K562 (cell line): ENCODE measurements at regions of chr18 and their contacts with region 1.

Region 1: DNA sequence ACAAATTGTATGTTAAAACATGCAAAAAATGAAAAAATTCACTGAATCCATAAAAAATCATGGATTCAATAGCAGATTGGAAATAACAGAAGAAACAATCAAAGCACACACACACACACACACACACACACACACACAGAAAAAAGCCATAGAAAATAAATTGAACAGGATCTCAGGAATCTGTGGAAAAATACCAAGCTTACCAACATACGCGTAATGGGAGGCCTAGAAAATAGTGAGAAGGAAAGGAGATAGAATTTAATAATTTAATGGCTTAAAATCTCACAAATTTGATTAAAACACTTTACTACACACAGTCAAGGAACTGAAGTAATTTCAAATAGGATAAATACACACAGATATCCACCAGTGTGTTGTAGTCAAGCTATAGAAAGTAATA is 1671.5 kb upstream of the PIK3C3 start:
- DNase-seq: no peak
- ATAC-seq: no peak
- H3K4me3 ChIP-seq: no peak overlapping the region
- H3K27ac ChIP-seq: no peak overlapping the region
- H3K4me1 ChIP-seq: no peaks in the 10 kb centered on the region
- H3K27me3 ChIP-seq: no peaks in the 10 kb centered on the region
- CTCF ChIP-seq: no peak
- EP300 ChIP-seq: no peak
- POLR2A ChIP-seq: no peak
- RAD21 ChIP-seq: no peak

Region 2: GRCh38 chr18:39772155-39772919 is 511.2 kb before region 1 on chr18:
- CTCF ChIA-PET with region 1: no interaction called
- POLR2A ChIA-PET with region 1: no interaction called
- in situ Hi-C with region 1: no loop called
- intact Hi-C with region 1: loop called (anchors 2 kb)
- DNase-seq: no peak
- ATAC-seq: no peak
- H3K4me3 ChIP-seq: no peak overlapping the region
- H3K27ac ChIP-seq: no peak overlapping the region
- H3K4me1 ChIP-seq: no peaks in the 10 kb centered on the region
- H3K27me3 ChIP-seq: no peaks in the 10 kb centered on the region
- CTCF ChIP-seq: no peak
- EP300 ChIP-seq: no peak
- POLR2A ChIP-seq: no peak
- RAD21 ChIP-seq: no peak